Aorta (tissue), 5 donors: ENCODE measurements at regions of chr5 and their contacts with region 1.

Region 1: GRCh38 chr5:153390569-153390968 is 99.9 kb upstream of the GRIA1 start:
- DNase-seq: no peak
- ATAC-seq: no peak
- H3K4me3 ChIP-seq: no peak overlapping the region
- H3K27ac ChIP-seq: no peak overlapping the region
- H3K4me1 ChIP-seq: no peaks in the 10 kb centered on the region
- H3K27me3 ChIP-seq: no peaks in the 10 kb centered on the region

Region 2: DNA sequence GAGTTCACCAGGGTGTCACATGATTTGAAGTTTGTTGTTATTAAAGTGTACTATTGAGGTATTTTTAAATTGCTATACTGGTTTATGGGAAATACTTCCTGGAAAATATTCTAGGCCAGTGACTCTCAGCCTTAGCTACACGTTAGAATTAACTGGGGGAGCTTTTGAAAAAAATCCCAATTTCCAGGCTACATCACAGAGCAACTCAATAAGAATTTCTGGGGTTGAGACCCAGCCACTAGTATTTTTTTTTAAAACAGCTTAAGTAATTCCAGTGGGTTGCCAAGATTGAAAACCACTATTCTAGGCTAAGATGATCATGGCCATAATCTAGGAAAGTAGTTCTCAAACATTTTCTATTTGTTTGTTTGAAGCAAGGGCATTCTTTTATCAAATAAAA is 43.0 kb before region 1 on chr5:
- intact Hi-C with region 1: loop called (anchors 5 kb)
- DNase-seq: no peak
- ATAC-seq: no peak
- H3K4me3 ChIP-seq: no peak overlapping the region
- H3K27ac ChIP-seq: peak overlapping the region in 1 of 2 donors; percentile 43
- H3K4me1 ChIP-seq: peaks cover 1 to 5% of the 10 kb centered on the region in 2 donors
- H3K27me3 ChIP-seq: no peaks in the 10 kb centered on the region